ENCODE measurements at regions of chr20 and their contacts with region 1.

Region 1: DNA sequence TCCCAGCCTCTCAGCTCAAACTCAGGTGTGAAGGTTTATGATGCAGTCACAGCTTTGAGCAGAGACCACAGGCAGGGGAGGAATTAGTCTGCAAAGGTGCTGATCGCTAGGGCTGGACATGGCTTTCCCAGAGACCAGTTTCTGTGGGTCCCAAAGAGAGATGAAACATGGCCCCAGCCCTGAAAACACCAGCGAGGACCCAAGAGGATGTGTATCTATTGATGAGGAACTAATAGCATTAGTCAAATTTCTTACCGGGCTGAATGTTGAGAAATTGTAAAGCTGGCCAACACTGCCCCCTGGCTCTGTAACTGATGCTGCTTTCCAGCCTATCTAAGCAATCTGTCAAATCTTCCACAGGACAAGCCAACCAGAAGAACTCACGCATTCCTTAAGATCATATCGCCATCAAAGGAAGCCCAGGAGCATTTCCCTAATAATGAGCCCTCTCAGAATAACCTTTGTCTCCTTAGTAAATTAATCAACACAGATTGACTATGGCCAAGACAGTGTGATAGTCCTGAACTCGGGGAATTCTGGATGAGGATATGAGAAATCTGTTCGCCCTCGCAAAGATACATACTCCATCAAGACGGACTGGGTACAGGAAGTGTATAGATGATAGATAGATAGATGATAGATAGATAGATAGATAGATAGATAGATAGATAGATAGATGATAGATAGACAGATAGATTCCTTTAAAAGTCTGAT is 7.8 kb upstream of the ACSS1 start:
- DNase-seq: peak; percentile 76
- CTCF ChIP-seq: peak; percentile 52

Region 2: DNA sequence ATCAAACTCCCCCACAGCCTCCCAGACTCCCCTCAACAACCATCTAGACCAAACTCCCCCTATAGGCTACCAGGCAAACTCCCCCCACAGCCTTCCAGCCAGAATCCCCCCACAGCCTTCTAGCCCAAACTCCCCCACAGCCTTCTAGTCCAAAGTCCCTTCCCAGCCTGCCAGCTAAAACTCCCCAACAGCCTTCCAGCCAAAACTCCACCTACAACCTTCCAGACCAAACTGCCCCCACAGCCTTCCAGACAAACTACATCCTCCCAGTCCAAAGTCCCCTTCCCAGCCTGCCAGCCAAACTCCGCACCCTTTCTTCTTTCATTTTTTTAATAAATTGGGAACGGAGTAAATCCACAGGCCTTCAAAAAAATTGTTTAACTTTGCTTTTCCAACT is 633.7 kb before region 1 on chr20:
- in situ Hi-C with region 1: no loop called
- DNase-seq: no peak
- CTCF ChIP-seq: no peak

Region 3: DNA sequence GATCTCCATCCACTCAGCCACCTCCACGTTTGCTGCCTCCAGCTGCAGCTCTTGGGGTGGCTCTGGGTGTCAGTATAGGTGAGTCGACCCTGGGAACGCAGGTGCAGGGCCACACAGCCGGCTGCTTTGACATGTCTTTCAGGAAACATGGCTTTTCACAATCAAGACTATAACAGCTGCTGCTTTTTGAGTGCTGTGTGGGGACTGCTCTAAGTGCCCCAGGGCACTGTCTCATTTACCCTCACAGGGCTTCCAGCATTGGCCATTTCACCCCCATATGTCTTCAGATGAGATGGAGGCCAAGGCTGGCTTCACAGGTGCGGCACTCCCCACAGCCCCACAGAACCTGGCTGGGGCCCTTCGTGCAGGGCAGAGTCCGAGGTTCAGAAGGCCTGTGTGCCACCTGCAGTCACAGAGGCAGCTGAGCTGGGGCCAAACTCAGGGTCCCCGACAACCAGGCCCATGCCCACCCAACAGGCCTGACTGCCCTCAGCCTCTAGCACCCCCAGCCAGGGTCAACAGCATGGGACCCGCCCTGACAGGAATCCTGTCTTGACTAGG is 131.6 kb before region 1 on chr20:
- in situ Hi-C with region 1: no loop called
- DNase-seq: no peak
- CTCF ChIP-seq: no peak

Region 4: DNA sequence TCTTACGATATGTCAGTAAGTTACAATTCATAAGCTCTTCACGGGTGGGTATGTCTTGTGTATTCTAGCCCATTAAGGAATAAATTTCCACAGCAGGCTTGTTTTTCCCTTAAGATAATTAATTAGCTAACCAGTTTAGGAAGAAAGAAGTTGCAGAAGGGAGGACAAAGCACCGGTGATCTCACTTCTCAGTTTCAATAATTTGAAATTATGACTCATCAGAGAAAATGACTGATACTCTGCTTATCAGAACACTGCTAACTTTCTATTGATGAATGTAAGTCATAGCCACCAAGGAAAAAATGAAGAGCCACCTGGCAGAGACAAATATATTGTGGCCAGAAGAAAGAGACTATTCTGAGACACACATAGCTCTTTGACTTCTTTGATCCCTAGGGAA is 94.7 kb after region 1 on chr20:
- in situ Hi-C with region 1: no loop called
- DNase-seq: no peak
- CTCF ChIP-seq: no peak

Region 5: DNA sequence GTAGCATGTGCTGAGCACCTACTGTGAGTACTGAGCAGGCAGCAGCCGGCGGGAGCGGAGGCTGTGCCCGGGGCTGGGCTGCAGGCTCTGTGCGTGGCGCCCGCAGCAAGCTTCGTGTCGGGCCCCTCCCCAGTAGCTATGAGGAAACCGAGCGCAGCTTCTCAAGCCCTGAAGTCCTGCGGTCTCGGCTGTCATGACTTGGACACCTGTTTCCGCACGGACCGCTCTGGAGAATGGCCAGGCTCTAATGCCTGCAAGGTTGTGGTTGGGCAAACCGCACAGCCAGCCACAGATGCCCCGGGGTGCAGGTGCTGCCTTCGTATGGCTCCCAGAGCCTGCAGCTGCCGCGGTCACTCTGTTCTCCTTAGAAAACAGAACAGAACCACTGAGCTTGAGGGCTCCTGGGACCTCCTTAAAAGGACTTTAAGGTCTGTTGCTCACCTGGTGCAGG is 215.8 kb after region 1 on chr20:
- in situ Hi-C with region 1: no loop called
- DNase-seq: no peak
- CTCF ChIP-seq: no peak

Region 6: DNA sequence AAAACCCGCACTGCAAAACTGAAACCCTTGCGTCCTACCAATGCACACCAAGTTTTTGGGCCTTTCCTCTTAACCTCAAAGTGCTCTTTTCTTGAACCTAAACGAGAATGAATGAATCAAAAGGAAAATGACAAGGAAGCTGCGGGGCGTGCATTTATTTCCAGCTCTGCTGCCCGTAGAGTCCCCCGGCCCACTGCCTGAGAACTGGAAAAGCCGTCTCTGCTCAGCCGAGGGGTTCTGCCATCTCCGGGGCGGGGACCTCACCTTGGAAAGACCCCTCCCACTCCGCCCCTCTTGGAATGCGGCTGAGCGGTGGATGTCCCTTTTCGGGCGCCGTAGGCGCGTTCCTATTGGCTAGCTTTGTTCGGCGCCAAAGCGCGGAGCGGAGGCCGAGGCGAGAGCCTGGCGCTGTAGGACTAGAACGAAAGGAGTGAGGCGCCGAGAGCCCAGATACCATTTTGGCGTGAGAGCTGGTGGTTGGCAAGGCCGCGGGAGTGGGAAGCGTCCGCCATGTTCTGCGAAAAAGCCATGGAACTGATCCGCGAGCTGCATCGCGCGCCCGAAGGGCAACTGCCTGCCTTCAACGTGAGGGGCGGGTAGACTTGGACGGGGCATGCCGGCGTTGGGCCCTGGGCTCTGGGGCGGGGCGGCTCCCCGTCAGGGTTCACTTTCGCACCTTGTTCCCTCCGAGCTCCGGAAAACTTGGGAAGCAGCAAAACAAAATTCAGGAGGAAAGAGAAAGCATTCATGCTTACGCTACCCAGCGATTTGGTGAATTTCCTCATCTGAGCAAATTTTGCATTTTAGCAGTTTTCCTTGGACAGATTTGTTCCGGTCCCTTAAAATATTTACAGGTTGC is 341.8 kb after region 1 on chr20 and contains the start of gene GINS1:
- in situ Hi-C with region 1: loop called (anchors 25 kb)
- DNase-seq: peak; percentile 93
- CTCF ChIP-seq: no peak

Measured in GM13976 (cell line).